ENCODE measurements at regions of chr10 and their contacts with region 1.

Region 1: DNA sequence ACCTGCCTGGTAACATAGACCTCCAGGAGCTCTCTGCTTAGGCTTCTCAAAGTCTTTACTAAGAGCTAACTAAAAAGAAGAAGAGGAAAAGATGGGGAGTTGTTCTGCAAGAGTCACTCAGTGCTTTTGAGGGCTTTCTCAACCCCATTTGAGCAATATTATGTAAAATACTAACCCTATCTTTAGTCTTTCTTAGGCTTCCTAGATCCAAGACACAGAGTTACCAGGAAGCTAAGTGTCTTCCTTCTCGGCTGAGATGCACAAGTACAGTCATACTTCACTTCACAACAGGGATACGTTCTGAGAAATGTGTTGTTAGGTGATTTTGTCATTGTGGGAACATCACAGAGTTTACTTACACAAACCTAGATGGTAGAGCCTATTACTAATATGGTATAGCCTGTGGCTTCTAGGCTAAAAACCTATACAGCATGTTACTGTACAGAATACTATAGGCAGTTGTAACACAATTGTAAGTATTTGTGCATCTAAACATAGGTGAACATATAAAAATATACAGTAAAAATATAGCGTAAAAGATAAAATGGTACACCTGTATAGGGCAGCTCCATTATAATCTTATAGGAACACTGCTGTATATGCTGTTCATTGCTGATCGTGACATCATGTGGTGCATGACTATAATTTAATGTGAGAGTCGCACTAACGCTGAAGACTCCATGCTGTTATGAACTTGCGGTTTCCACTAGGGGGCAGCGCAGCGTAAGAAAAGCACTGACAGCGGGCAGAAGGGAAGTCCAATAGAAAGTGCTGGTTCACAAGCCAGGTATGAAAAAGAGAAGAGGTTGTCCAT is 16.3 kb downstream of the ANKRD22 start:
- DNase-seq: peak; percentile 95
- ATAC-seq: peak; percentile 84
- H3K4me3 Mint-ChIP-seq: no peak overlapping the region
- H3K27ac Mint-ChIP-seq: no peak overlapping the region
- H3K4me1 Mint-ChIP-seq: peaks cover 35% of the 10 kb centered on the region
- H3K27me3 Mint-ChIP-seq: no peaks in the 10 kb centered on the region
- CTCF ChIP-seq: peak; percentile 86

Region 2: GRCh38 chr10:88810196-88810961 is 24.9 kb before region 1 on chr10:
- CTCF ChIA-PET with region 1: interaction called, 13 read pairs
- POLR2A ChIA-PET with region 1: no interaction called
- intact Hi-C with region 1: no loop called
- DNase-seq: peak; percentile 53
- ATAC-seq: peak; percentile 87
- H3K4me3 Mint-ChIP-seq: no peak overlapping the region
- H3K27ac Mint-ChIP-seq: no peak overlapping the region
- H3K4me1 Mint-ChIP-seq: peaks cover 17% of the 10 kb centered on the region
- H3K27me3 Mint-ChIP-seq: no peaks in the 10 kb centered on the region
- CTCF ChIP-seq: peak; percentile 78

Region 3: GRCh38 chr10:88865281-88865876 is 30.1 kb after region 1 on chr10:
- CTCF ChIA-PET with region 1: interaction called, 19 read pairs
- POLR2A ChIA-PET with region 1: no interaction called
- intact Hi-C with region 1: no loop called
- DNase-seq: no peak
- ATAC-seq: no peak
- H3K4me3 Mint-ChIP-seq: no peak overlapping the region
- H3K27ac Mint-ChIP-seq: no peak overlapping the region
- H3K4me1 Mint-ChIP-seq: no peaks in the 10 kb centered on the region
- H3K27me3 Mint-ChIP-seq: peaks cover 5% of the 10 kb centered on the region
- CTCF ChIP-seq: no peak

Region 4: GRCh38 chr10:88901206-88901983 is 66.1 kb after region 1 on chr10:
- CTCF ChIA-PET with region 1: interaction called, 54 read pairs
- POLR2A ChIA-PET with region 1: interaction called, 4 read pairs
- intact Hi-C with region 1: no loop called
- DNase-seq: no peak
- ATAC-seq: peak; percentile 56
- H3K4me3 Mint-ChIP-seq: peak overlapping the region; percentile 53
- H3K27ac Mint-ChIP-seq: peak overlapping the region; percentile 96
- H3K4me1 Mint-ChIP-seq: peaks cover 63% of the 10 kb centered on the region
- H3K27me3 Mint-ChIP-seq: no peaks in the 10 kb centered on the region
- CTCF ChIP-seq: no peak

Region 5: DNA sequence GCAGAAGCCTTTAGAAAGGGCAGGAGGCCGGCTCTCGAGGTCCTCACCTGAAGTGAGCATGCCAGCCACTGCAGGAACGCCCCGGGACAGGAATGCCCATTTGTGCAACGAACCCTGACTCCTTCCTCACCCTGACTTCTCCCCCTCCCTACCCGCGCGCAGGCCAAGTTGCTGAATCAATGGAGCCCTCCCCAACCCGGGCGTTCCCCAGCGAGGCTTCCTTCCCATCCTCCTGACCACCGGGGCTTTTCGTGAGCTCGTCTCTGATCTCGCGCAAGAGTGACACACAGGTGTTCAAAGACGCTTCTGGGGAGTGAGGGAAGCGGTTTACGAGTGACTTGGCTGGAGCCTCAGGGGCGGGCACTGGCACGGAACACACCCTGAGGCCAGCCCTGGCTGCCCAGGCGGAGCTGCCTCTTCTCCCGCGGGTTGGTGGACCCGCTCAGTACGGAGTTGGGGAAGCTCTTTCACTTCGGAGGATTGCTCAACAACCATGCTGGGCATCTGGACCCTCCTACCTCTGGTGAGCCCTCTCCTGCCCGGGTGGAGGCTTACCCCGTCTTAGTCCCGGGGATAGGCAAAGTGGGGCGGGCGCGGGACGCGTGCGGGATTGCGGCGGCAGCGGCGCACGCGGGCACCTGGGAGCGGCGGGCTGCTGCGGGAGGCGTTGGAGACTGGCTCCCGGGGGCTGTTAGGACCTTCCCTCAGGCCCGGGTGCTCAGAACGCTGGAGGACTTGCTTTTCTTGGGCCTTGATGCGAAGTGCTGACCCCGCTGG is 155.3 kb after region 1 on chr10 and contains the start of gene FAS:
- CTCF ChIA-PET with region 1: interaction called, 6 read pairs
- POLR2A ChIA-PET with region 1: interaction called, 4 read pairs
- intact Hi-C with region 1: loop called (anchors 5 kb)
- DNase-seq: peak; percentile 91
- ATAC-seq: peak; percentile 79
- H3K4me3 Mint-ChIP-seq: peak within 1 kb of the TSS; percentile 86
- H3K27ac Mint-ChIP-seq: peak within 1 kb of the TSS; percentile 96
- H3K4me1 Mint-ChIP-seq: peaks cover 54% of the 10 kb centered on the region
- H3K27me3 Mint-ChIP-seq: no peaks in the 10 kb centered on the region
- CTCF ChIP-seq: no peak
- total RNA-seq, gene FAS: 48.6 to 49.0 TPM

Region 6: GRCh38 chr10:89156161-89156835 is 321.0 kb after region 1 on chr10:
- CTCF ChIA-PET with region 1: no interaction called
- POLR2A ChIA-PET with region 1: no interaction called
- intact Hi-C with region 1: no loop called
- DNase-seq: no peak
- ATAC-seq: no peak
- H3K4me3 Mint-ChIP-seq: no peak overlapping the region
- H3K27ac Mint-ChIP-seq: no peak overlapping the region
- H3K4me1 Mint-ChIP-seq: peaks cover 12% of the 10 kb centered on the region
- H3K27me3 Mint-ChIP-seq: peaks cover 27% of the 10 kb centered on the region
- CTCF ChIP-seq: no peak

Measured in activated CD8-positive, alpha-beta T cell treated with anti-CD3 and anti-CD28 coated beads for 36 hours (primary cell).